HEK293 (cell line): ENCODE measurements at regions of chr5 and their contacts with region 1.

Region 1: DNA sequence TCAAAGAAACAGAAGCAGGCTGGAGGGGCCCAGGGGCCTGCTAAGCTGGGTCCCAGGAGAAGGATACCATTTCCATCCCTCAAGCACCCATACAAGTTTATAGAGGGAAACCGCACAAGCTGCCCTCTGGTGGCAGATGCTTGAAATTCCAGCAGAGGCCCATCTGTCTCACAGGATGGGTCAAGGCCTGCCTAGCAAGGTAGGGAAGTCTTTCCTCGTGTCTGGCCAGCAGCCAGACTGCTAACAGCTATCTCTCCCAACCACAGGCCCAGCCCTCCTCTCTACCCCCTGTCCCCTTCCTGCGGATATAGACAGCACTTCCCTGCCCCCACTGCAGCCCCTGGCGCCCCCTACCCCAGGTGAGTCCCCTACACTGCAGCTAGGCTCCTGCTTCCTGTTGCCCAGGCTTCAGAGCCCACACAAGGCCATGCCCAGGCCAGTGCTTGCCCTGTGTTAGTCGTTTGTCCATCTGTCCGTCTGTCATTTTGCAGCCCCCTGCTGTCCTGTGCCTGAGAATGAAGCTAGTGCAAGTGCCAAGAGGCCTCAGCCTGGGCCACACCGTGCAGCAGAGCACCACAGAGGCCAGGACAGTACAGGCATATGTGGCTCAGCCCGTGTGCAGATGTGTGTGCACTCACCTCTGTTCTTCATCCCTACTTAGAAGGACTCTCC is 26.2 kb downstream of the TCF7 start:
- H3K4me3 ChIP-seq: no peak overlapping the region
- H3K27ac ChIP-seq: no peak overlapping the region
- H3K4me1 ChIP-seq: no peaks in the 10 kb centered on the region
- CTCF ChIP-seq: peak; percentile 90

Region 2: DNA sequence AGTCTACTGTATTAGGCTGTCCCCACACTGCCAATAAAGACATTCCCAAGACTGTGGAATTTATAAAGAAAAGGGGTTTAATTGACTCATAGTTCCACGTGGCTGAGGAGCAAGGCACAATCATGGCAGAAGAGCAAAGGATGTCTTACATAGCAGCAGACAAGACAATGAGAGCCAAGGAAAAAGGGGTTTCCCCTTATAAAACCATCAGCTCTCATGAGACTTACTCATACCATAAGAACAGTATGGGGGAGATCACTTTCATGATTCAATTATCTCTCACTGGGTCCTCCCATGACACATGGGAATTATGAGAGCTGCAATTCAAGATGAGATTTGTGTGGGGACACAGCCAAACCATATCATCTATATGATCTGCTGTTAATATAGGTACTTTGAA is 513.5 kb before region 1 on chr5:
- CTCF ChIA-PET with region 1: no interaction called
- POLR2A ChIA-PET with region 1: no interaction called
- H3K4me3 ChIP-seq: no peak overlapping the region
- H3K27ac ChIP-seq: no peak overlapping the region
- H3K4me1 ChIP-seq: no peaks in the 10 kb centered on the region
- CTCF ChIP-seq: no peak

Region 3: DNA sequence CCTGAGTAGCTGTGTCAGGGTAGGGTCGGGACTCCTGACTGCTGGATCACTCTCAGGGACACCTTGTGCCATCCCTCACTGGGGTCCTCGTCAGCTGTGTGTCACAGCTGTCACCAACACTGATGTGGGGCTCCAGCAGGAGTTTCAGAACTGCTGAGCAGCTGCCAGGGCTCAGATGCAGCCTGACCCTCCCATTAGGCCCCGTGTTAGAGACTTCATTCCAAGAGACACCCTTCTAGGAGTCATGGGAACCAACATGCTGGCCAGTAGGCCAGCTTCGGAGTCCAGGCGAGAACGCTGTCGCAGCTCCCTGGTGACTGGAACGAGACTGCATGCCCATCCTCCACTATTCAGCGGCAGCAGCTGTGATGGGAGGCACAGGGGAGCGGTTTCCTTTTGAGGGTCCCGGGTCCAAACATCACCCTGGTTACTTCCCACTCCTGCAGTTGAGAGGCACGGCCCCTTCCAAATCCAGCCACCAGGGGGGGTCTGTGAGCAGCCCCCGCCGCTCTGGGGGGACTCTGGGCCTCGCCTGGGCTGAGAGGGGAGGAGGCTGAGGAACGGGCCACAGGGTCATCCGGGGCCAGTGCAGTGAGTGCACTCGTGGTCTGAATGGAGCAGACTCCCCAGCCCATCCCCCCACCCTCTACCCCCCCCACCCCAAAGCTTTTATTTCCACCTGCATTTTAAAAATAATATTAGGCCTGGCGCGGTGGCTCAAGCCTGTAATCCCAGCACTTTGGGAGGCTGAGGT is 38.8 kb before region 1 on chr5:
- CTCF ChIA-PET with region 1: interaction called, 45 read pairs
- POLR2A ChIA-PET with region 1: interaction called, 3 read pairs
- H3K4me3 ChIP-seq: no peak overlapping the region
- H3K27ac ChIP-seq: no peak overlapping the region
- H3K4me1 ChIP-seq: no peaks in the 10 kb centered on the region
- CTCF ChIP-seq: peak; percentile 70; the same call in 1 of the 2 replicates

Region 4: GRCh38 chr5:134113902-134114875 is 26.5 kb before region 1 on chr5 and contains the start of gene TCF7:
- CTCF ChIA-PET with region 1: interaction called, 28 read pairs
- POLR2A ChIA-PET with region 1: interaction called, 5 read pairs
- H3K4me3 ChIP-seq: peak within 1 kb of the TSS; percentile 60
- H3K27ac ChIP-seq: peak within 1 kb of the TSS; percentile 56; the same call in 1 of the 2 replicates
- H3K4me1 ChIP-seq: no peaks in the 10 kb centered on the region
- CTCF ChIP-seq: no peak

Region 5: DNA sequence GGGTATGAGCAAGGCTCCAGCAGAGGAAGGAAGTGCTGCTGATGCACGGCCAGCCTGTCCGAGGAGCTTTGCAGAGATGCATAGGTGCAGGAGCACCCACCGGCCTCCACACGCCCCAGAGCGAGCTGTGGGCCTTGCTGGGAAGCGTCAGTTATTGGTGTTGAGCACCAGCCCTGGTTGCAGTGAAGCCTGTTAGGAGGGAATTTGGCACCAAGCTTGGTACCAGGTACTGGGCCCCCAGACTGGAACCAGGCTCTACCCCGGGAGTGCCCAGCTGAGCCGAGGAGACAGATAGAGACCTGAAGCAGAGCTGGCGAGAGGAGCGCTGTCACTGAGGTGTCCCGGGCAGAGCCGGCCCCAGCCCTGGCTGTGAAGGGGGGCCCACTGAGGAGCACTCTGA is 20.9 kb before region 1 on chr5:
- CTCF ChIA-PET with region 1: interaction called, 28 read pairs
- POLR2A ChIA-PET with region 1: no interaction called
- H3K4me3 ChIP-seq: no peak overlapping the region
- H3K27ac ChIP-seq: no peak overlapping the region
- H3K4me1 ChIP-seq: no peaks in the 10 kb centered on the region
- CTCF ChIP-seq: no peak

Region 6: GRCh38 chr5:134125039-134126015 is 15.3 kb before region 1 on chr5:
- CTCF ChIA-PET with region 1: interaction called, 34 read pairs
- POLR2A ChIA-PET with region 1: interaction called, 3 read pairs
- H3K4me3 ChIP-seq: no peak overlapping the region
- H3K27ac ChIP-seq: no peak overlapping the region
- H3K4me1 ChIP-seq: no peaks in the 10 kb centered on the region
- CTCF ChIP-seq: no peak

Region 7: DNA sequence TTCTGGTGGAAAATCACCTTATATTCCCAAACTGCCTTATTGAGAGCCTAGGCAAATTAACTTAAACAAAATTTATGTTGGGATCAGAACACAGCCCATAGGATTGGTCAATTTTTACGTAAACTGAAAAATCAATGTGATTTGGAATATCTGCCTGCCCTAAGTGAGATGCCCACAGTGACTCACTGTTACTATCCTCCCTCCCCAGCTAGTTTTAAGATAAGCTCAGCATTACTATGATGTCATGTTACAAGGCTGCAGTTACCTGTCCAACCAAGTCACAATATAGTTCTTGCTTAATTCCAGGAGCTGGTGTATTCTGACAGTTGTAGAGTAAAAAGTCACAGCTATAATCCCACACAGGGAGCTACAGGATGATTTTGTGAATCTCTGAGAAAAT is 13.0 kb after region 1 on chr5:
- CTCF ChIA-PET with region 1: interaction called, 24 read pairs
- POLR2A ChIA-PET with region 1: interaction called, 3 read pairs
- H3K4me3 ChIP-seq: no peak overlapping the region
- H3K27ac ChIP-seq: 0 out of 2 replicates have a peak overlapping the region, but pooled peaks have one; percentile 16
- H3K4me1 ChIP-seq: peaks cover 2% of the 10 kb centered on the region; the same call in 1 of the 2 replicates
- CTCF ChIP-seq: no peak

Region 8: DNA sequence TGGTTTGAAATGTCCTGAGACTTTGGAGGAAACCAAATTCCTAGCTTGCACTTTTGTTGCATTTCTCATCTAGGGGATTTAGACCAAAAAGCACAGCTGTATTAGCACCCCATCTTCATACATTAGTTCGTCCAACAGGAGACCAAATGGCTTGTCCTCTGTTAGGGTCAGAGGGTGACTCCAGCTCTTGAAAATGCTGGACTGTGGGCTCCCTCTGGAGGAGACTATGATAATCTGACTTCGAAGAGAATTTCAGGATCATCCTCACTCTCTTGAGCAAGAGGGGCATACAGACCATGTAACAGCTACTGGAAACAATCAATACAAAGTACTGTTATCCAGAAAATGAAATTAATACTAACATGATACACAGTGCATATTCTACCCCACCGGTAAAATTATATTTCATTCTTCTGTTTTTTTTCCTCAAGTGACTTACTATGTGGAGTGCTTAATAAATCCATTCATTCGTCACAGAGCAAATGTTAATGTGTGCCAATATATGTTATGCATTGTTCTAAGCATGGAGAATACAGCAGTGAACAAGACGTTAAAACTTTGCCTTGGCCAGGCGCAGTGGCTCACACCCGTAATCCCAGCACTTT is 148.9 kb after region 1 on chr5:
- CTCF ChIA-PET with region 1: interaction called, 10 read pairs
- POLR2A ChIA-PET with region 1: no interaction called
- H3K4me3 ChIP-seq: no peak overlapping the region
- H3K27ac ChIP-seq: no peak overlapping the region
- H3K4me1 ChIP-seq: no peaks in the 10 kb centered on the region
- CTCF ChIP-seq: peak; percentile 83